PC-9 (cell line): ENCODE measurements at regions of chr4 and their contacts with region 1.

Region 1: DNA sequence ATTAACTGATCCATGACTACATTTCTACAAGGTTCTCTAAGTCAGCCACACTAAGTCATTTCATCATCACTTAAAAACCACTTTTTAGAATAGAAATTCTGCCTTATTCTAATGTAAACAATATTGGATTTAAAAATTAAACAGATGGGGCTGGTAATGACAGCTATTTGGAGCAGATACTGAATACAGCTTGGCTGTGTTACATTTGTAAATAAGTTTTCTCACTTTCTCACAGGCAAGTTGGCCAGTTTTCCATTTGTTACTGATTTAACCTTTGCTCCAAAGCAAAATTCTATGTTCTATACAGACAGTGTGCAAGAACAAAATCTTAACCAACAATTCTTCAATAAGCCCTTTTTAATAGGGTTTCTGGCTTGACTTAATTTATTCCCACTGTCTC is 370.7 kb downstream of the GRIA2 start:
- DNase-seq: no peak
- H3K4me3 ChIP-seq: no peak overlapping the region
- H3K27ac ChIP-seq: no peak overlapping the region
- H3K4me1 ChIP-seq: no peaks in the 10 kb centered on the region
- H3K27me3 ChIP-seq: no peaks in the 10 kb centered on the region
- CTCF ChIP-seq: no peak

Region 2: DNA sequence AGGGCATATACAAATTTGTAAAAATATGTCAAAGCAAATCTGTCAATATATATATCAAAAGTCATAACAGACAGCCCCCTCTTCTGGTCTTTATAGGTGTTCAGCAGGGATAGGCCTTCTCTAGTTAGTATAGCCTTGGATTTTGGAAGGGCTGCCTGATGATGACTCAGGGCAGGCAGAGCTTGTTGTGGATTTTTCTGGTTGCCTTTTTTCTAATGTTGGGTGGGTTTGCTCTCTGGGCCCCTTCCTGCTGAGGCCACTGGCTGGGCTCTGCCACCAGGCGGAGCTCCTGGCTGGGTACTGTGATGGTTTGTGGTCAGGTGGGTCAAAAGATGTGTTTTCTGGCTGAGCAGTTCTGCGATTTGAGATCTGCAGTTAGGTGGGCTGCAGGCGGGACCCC is 76.5 kb before region 1 on chr4:
- CTCF ChIA-PET with region 1: no interaction called
- POLR2A ChIA-PET with region 1: no interaction called
- intact Hi-C with region 1: no loop called
- DNase-seq: no peak
- H3K4me3 ChIP-seq: no peak overlapping the region
- H3K27ac ChIP-seq: no peak overlapping the region
- H3K4me1 ChIP-seq: no peaks in the 10 kb centered on the region
- H3K27me3 ChIP-seq: no peaks in the 10 kb centered on the region
- CTCF ChIP-seq: peak; percentile 24; the same call in 1 of the 2 replicates

Region 3: GRCh38 chr4:158161551-158162354 is 570.5 kb after region 1 on chr4:
- CTCF ChIA-PET with region 1: interaction called, 15 read pairs
- POLR2A ChIA-PET with region 1: no interaction called
- intact Hi-C with region 1: no loop called
- DNase-seq: peak; percentile 60 to 66
- H3K4me3 ChIP-seq: no peak overlapping the region
- H3K27ac ChIP-seq: peak overlapping the region; percentile 66
- H3K4me1 ChIP-seq: peaks cover 8% of the 10 kb centered on the region
- H3K27me3 ChIP-seq: no peaks in the 10 kb centered on the region
- CTCF ChIP-seq: no peak